H1 (cell line): ENCODE measurements at regions of chr1 and their contacts with region 1.

Region 1: DNA sequence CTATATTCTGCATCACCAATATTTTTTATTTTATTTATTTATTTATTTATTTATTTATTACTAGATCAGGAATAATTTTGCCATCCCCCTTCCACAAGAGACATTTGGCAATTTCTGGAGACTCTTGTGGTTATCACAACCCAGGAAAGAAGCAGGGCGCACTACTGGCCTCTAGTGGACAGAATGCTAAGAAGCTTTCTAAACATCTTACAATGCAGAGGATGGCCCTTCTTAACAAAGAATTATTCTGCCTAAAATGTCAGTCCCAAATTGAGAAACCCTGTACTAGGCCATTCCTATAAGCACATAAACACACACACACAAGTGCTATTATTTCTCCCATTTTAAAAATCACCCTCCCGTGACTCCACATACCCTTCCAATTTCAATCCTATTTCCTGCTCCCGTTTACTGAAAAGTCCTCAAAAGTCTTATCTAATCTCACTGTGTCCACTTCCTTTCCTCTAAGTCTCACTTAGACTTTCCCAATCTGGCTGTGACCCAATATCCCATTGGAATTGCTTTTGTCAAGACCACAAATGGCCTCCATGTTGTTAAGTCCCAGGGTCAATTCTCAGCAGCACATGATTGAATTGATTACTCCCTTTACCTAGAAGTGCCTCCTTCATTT is 43.7 kb upstream of the RNF11 start:
- DNase-seq: peak; percentile 9 to 76
- H3K4me3 ChIP-seq: no peak overlapping the region
- H3K27ac ChIP-seq: no peak overlapping the region
- H3K4me1 ChIP-seq: no peaks in the 10 kb centered on the region
- H3K27me3 ChIP-seq: no peaks in the 10 kb centered on the region
- CTCF ChIP-seq: peak in 2 of 3 experiments; percentile 70 to 77; a peak in 3 of 4 replicates
- EP300 ChIP-seq: no peak
- POLR2A ChIP-seq: no peak
- RAD21 ChIP-seq: peak; percentile 63 to 73

Region 2: DNA sequence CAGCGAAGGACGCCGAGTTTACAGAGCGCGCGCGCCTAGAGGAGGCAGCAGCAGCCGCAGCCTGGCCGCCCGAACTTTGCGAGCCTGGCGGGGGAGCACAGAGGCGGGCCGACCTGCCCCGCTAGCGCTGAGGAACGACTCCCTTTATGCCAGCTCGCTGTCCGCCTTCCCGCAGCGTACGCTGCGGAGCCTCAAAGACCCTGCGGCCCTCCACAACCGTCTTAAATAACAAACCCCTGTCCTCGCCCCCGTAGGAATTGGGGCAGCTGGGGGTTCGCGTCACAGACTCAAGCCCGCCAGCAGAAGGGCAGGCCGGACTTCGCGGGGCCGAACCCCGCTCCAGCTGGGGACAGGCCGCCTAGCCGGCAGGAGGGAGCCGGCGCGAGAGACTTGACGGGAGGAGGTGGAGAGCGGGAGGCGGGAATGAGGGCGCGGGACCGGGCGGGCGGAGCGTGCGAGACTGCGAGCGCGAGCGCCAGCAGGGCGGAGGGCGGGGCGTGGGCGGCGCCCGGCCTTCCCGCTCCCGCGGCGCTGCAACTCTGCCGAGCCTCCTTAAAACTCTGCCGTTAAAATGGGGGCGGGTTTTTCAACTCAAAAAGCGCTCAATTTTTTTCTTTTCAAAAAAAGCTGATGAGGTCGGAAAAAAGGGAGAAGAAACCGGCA is 224.0 kb before region 1 on chr1:
- CTCF ChIA-PET with region 1: interaction called, 10 read pairs
- POLR2A ChIA-PET with region 1: no interaction called
- DNase-seq: peak in 1 of 2 experiments; percentile 87
- H3K4me3 ChIP-seq: peak overlapping the region; percentile 47 to 66 (median 53)
- H3K27ac ChIP-seq: no peak overlapping the region
- H3K4me1 ChIP-seq: peaks cover 6 to 12% (median 9%) of the 10 kb centered on the region in 4 experiments
- H3K27me3 ChIP-seq: peaks cover 37 to 72% (median 55%) of the 10 kb centered on the region in 4 experiments
- CTCF ChIP-seq: peak; percentile 25 to 45 (median 32); a peak in 3 of 4 replicates
- EP300 ChIP-seq: no peak
- POLR2A ChIP-seq: no peak
- RAD21 ChIP-seq: peak; percentile 31 to 44; a peak in 3 of 4 replicates

Region 3: GRCh38 chr1:51175278-51175677 is 17.1 kb before region 1 on chr1:
- CTCF ChIA-PET with region 1: interaction called, 83 read pairs
- POLR2A ChIA-PET with region 1: no interaction called
- DNase-seq: no peak
- H3K4me3 ChIP-seq: no peak overlapping the region
- H3K27ac ChIP-seq: no peak overlapping the region
- H3K4me1 ChIP-seq: no peaks in the 10 kb centered on the region
- H3K27me3 ChIP-seq: no peaks in the 10 kb centered on the region
- CTCF ChIP-seq: no peak
- EP300 ChIP-seq: no peak
- POLR2A ChIP-seq: no peak
- RAD21 ChIP-seq: no peak

Region 4: DNA sequence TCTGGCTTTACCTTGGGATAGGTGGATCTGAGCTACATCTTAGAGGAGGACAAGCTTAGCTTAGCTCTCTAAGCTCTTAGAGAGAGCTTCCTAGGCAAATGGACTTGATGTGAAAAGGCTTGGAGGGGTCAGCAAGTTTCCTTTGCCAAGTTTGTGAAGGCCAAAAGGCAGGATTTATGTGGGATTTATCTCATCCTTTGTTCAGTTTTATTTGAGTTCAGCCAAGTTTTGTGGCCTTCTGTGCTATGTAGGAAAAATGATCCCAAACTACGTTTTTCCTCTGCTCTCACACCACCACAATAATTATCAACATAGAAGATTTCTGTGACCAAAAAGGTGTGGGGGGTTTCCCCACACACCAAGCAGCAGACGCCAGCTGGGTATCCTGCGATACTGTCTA is 17.7 kb after region 1 on chr1:
- CTCF ChIA-PET with region 1: interaction called, 13 read pairs
- POLR2A ChIA-PET with region 1: no interaction called
- DNase-seq: no peak
- H3K4me3 ChIP-seq: no peak overlapping the region
- H3K27ac ChIP-seq: no peak overlapping the region
- H3K4me1 ChIP-seq: no peaks in the 10 kb centered on the region
- H3K27me3 ChIP-seq: no peaks in the 10 kb centered on the region
- CTCF ChIP-seq: no peak
- EP300 ChIP-seq: no peak
- POLR2A ChIP-seq: no peak
- RAD21 ChIP-seq: no peak